Vagina (tissue), 2 donors: ENCODE measurements at regions of chr18 and their contacts with region 1.

Region 1: DNA sequence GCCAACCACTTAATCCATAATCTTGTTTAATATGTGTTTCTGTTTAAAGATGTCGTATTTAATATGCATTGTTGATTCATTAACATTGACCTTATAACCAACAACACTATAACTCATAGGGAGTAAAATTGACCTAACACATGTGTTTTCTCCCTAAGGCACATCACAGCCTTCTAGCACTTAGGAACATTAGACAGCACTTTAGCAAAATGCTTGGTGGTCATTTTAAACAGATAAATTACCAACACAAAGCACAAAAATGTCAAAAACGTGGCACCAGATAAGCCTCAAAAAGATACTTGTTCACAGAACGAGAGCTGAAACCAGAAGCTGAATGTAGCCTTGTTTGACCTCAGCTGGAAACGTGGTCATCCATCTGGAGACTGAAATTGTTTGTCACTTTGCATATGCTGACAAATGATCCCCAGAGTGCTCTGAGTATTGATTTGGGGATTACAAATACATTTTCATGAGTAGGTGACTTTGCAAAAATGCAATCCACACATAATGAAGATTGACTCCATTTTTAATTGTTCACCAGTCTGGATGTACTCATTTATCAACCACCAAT is 139.2 kb downstream of the CCDC102B start:
- DNase-seq: no peak
- H3K4me3 ChIP-seq: no peak overlapping the region
- H3K27ac ChIP-seq: no peak overlapping the region
- H3K4me1 ChIP-seq: no peaks in the 10 kb centered on the region
- H3K27me3 ChIP-seq: no peaks in the 10 kb centered on the region
- CTCF ChIP-seq: no peak
- POLR2A ChIP-seq: no peak

Region 2: GRCh38 chr18:68948622-68949021 is 11.5 kb after region 1 on chr18:
- intact Hi-C with region 1: loop called (anchors 2 kb)
- DNase-seq: no peak
- H3K4me3 ChIP-seq: no peak overlapping the region
- H3K27ac ChIP-seq: no peak overlapping the region
- H3K4me1 ChIP-seq: no peaks in the 10 kb centered on the region
- H3K27me3 ChIP-seq: no peaks in the 10 kb centered on the region
- CTCF ChIP-seq: no peak
- POLR2A ChIP-seq: no peak

Region 3: DNA sequence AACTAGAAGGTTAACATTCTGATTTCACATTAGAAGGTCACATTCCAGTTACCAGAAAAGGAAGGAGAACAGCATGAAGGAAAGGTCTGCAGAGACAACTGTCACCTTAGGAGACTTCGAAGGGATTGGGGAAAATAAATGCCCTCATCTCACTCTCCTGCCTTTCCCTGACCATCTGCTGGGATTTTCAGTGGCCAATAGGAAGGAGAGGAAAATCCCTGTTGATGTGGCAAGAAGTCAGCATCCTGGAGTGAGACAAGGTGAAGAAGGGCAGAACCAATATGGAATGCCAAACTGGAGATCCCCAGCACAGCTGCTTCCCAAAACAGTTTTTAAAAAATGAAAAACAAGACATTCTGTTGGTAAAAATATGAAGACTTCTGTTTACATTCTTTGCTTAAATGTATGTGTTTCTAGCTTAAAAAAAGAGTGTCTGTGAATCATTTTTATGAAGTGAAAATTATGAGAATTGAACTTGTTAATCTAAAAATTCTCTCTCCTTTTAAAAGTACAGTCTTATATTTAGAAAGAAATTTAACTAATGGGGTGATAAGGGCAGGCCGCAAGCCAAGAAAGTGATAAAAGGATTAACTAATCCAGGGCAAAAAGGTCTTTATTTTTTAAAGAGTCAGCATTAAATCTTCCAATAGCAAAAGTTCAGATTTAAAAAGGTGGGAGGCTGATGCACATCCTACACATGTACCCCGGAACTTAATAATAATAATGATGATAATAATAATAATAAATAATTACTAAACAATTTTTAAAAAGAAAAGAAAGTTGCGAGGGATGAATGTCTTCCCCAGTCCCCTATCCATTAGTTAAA is 302.9 kb after region 1 on chr18:
- intact Hi-C with region 1: no loop called
- DNase-seq: no peak
- H3K4me3 ChIP-seq: no peak overlapping the region
- H3K27ac ChIP-seq: no peak overlapping the region
- H3K4me1 ChIP-seq: no peaks in the 10 kb centered on the region
- H3K27me3 ChIP-seq: no peaks in the 10 kb centered on the region
- CTCF ChIP-seq: no peak
- POLR2A ChIP-seq: no peak